ENCODE measurements at regions of chr13 and their contacts with region 1.

Region 1: DNA sequence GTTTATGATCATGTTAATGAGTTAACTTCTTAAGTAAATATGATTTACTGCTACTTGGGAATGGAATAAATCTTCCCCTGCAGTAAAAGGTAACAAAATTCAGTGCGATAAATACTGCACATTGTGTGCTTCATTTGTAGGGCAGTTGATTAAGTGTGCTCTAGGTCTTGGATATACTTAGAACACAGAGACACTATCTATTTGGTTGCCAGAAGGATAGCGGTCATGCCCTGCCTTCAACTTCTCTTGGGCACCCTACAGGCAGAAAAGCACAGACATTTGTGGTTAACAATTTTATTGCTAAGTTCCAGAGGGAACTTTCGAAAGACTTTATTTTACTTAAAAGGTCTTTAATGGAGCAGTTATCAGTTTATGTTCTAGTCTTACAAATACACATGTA is 605.8 kb downstream of the PCDH9 start:
- DNase-seq: no peak
- ATAC-seq: peak; percentile 95 to 98 (median 96)
- H3K4me3 ChIP-seq: no peak overlapping the region
- H3K27ac ChIP-seq: peak overlapping the region in 3 of 12 donors; percentile 0 to 49 (median 47)
- H3K4me1 ChIP-seq: peaks cover 0 to 16% (median 0%) of the 10 kb centered on the region in 12 donors
- H3K27me3 ChIP-seq: no peaks in the 10 kb centered on the region
- CTCF ChIP-seq: peak in 2 of 12 donors; percentile 12 to 16
- POLR2A ChIP-seq: no peak

Region 2: DNA sequence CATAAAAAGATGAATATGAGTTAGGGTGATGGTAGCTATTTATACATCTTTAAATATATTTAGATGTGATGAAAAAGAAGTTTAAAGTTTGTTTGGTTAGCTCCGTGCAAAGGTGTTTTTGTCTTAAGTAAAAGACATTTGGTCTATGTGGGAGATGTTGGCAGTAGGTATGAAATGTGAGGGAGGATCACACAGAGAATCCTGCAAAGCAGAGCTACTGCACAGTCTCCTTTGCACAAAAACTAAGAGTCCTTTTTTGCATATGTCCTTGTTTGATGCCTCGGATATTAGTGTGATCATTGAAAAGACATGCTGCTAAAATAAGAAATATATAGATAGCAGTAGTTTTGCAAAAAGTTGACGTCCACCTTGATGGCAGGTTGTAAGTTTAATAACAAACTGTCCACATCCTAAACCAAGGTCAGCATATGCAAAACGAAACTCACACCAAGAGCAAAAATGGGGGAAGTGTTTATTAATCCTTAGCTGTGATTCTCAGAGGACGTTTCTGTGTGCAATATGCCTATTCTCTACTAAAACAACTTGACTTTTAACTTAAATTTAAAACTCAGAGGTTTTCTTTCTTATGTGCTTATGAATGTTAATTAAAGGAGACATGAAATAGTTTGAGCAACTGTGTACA is 264.3 kb before region 1 on chr13:
- intact Hi-C with region 1: no loop called
- DNase-seq: no peak
- ATAC-seq: no peak
- H3K4me3 ChIP-seq: no peak overlapping the region
- H3K27ac ChIP-seq: no peak overlapping the region
- H3K4me1 ChIP-seq: no peaks in the 10 kb centered on the region
- H3K27me3 ChIP-seq: no peaks in the 10 kb centered on the region
- CTCF ChIP-seq: no peak
- POLR2A ChIP-seq: no peak

Region 3: GRCh38 chr13:66659701-66660462 is 35.6 kb after region 1 on chr13:
- intact Hi-C with region 1: no loop called
- DNase-seq: no peak
- ATAC-seq: peak in 3 of 4 donors; percentile 38 to 72 (median 54)
- H3K4me3 ChIP-seq: no peak overlapping the region
- H3K27ac ChIP-seq: peak overlapping the region in 2 of 12 donors; percentile 4 to 7
- H3K4me1 ChIP-seq: peaks cover 0 to 20% (median 8%) of the 10 kb centered on the region in 12 donors
- H3K27me3 ChIP-seq: no peaks in the 10 kb centered on the region
- CTCF ChIP-seq: no peak
- POLR2A ChIP-seq: no peak

Region 4: GRCh38 chr13:66994097-66994496 is 369.8 kb after region 1 on chr13:
- intact Hi-C with region 1: loop called in 1 of 10 experiments (anchors 10 kb)
- DNase-seq: peak; percentile 63 to 76 (median 68)
- ATAC-seq: peak; percentile 90 to 98 (median 96)
- H3K4me3 ChIP-seq: peak overlapping the region in 11 of 12 donors; percentile 7 to 58 (median 43)
- H3K27ac ChIP-seq: peak overlapping the region in 1 of 12 donors; percentile 42
- H3K4me1 ChIP-seq: peaks cover 0 to 7% (median 0%) of the 10 kb centered on the region in 12 donors
- H3K27me3 ChIP-seq: no peaks in the 10 kb centered on the region
- CTCF ChIP-seq: peak; percentile 20 to 70 (median 60)
- POLR2A ChIP-seq: no peak

Region 5: DNA sequence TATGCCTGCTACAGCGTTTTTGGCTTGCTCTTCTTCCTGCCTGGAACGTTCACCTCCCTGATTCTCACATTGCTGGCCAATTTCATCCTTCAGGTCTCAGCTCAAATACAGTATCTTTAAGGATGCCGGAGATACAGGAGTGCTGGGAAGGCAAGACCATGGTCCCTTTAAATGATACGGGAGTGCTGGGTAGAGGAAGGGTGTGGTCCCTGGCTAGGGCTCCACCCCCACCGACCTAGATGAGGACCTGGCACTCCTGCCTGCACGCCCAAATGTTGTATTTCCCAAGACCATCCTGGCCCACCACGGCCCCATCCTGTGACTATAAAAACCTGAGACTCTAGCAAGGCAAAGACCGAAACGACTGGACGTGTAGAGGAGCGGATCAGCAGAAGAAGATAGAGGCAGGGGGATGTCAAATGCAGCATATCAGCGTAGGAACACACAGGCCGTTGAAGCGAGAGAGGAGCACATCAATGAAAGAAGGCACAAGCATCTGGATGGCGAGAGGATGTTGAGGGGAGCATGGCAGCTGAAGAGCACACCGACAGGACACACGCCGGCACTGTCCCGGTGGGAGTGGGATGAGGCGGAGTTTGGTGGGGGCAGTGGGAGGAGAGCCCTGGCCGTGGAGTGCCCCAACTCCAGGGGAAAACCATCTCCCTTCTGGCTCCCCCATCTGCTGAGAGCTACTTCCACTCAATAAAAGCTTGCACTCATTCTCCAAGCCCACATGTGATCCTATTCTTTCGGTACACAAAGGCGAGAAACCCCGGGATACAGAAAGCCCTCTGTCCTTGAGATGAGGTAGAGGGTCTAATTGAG is 531.8 kb after region 1 on chr13:
- intact Hi-C with region 1: no loop called
- DNase-seq: no peak
- ATAC-seq: no peak
- H3K4me3 ChIP-seq: no peak overlapping the region
- H3K27ac ChIP-seq: no peak overlapping the region
- H3K4me1 ChIP-seq: peaks cover 0 to under 1% (median 0%) of the 10 kb centered on the region in 12 donors
- H3K27me3 ChIP-seq: no peaks in the 10 kb centered on the region
- CTCF ChIP-seq: no peak
- POLR2A ChIP-seq: no peak

Measured in heart left ventricle (tissue), 16 donors.